Breast epithelium (tissue), 4 donors: ENCODE measurements at regions of chr6 and their contacts with region 1.

Region 1: DNA sequence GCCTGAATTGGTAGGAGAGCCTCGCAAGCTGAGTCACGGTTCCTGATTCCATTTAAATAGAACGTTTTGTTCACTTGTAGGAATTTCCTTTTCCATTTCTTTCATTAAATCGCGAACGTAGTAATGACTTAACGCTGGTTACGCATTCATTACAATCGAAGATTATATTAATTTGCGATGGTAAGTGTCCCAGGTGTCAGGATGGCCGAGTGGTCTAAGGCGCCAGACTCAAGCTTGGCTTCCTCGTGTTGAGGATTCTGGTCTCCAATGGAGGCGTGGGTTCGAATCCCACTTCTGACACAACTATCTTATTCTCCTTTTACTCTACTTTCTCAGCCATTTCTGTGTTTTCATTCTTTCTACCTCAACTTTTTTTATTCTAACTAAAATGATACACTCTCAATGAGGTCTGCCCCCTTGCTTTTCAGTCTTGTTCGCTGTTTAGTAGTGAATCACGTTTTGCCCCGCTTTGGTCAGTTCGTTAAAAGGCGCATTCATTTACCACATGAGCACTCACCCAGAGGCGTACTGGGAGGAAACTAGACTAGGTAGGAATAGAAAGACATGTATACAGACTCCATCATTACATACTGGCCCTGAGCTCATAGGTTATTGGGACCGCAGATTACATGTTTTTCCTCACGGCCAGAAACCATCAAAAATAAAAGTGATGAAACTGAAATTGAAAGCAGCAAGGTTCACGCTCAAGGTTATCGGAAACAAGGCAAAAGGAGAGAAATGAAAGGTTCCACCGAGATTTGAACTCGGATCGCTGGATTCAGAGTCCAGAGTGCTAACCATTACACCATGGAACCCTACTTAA is 17.3 kb upstream of the TRIM27 start:
- DNase-seq: peak in 1 of 2 donors; percentile 82
- H3K4me3 ChIP-seq: peak overlapping the region; percentile 45 to 82 (median 79)
- H3K27ac ChIP-seq: peak overlapping the region; percentile 93 to 97
- H3K4me1 ChIP-seq: peaks cover 0 to 7% of the 10 kb centered on the region in 2 donors
- H3K27me3 ChIP-seq: no peaks in the 10 kb centered on the region
- CTCF ChIP-seq: no peak
- POLR2A ChIP-seq: no peak

Region 2: DNA sequence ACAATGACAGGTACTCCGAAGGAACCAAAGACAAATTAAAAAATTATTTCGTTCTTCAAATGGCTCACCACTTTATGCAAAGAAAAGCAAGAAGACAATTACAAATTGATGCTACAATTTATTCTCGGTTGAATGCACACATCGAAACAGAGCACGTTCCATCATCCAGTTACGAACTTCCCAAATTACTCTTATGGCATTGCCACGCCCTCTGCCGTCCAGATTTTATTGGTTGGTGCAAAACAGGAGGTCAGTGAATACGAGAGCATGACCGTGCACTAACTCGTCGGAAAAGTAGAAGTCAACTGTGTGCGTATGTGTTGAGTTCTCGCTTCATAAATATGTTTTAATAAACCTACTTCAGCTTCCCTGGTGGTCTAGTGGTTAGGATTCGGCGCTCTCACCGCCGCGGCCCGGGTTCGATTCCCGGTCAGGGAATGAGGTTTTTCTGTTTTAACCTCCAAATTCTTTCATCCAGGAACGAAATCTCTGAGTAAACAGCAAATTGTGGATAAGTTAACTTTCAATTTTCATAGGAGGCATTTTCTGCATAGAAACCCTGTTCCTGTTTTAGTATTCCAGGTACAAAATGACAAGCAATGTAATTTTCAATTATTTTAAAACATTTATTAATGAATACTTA is 40.9 kb after region 1 on chr6:
- intact Hi-C with region 1: loop called (anchors 5 kb)
- DNase-seq: peak; percentile 70 to 87
- H3K4me3 ChIP-seq: peak overlapping the region; percentile 49 to 85 (median 70)
- H3K27ac ChIP-seq: peak overlapping the region; percentile 83 to 90
- H3K4me1 ChIP-seq: no peaks in the 10 kb centered on the region
- H3K27me3 ChIP-seq: no peaks in the 10 kb centered on the region
- CTCF ChIP-seq: no peak
- POLR2A ChIP-seq: no peak

Region 3: DNA sequence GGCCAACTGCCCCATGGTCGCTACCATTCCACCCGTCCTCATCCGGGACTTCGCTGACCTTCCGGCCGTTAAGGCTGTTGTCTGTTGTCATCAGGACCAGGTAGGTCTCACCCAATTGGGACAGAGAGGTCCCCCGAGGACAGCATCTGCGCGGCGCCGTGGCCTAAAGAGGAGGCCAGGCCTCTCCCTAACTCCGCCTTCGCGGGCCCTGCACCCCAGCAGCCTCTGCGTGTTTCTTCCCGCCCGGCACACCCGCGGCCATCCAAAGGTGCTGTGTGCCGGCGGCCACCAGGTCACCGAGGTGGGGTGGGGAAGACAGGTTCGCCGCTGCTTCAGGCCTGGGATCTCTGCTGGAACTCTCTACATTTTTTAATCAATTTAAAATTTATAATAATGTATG is 94.9 kb after region 1 on chr6:
- intact Hi-C with region 1: no loop called
- DNase-seq: no peak
- H3K4me3 ChIP-seq: no peak overlapping the region
- H3K27ac ChIP-seq: no peak overlapping the region
- H3K4me1 ChIP-seq: no peaks in the 10 kb centered on the region
- H3K27me3 ChIP-seq: peaks cover 0 to 4% of the 10 kb centered on the region in 2 donors
- CTCF ChIP-seq: no peak
- POLR2A ChIP-seq: no peak